CD4-positive, alpha-beta memory T cell (primary cell): ENCODE measurements at regions of chr3 and their contacts with region 1.

Region 1: GRCh38 chr3:36911990-36912804 is 32.7 kb downstream of the TRANK1 start:
- DNase-seq: peak; percentile 54 to 84 (median 65)
- H3K4me3 ChIP-seq: peak overlapping the region; percentile 18 to 41
- H3K4me3 Mint-ChIP-seq: peak overlapping the region; percentile 61 to 84 (median 79)
- H3K27ac ChIP-seq: peak overlapping the region; percentile 72
- H3K27ac Mint-ChIP-seq: peak overlapping the region; percentile 66 to 95 (median 84)
- H3K4me1 ChIP-seq: peaks cover 38% of the 10 kb centered on the region
- H3K4me1 Mint-ChIP-seq: peaks cover 24 to 43% (median 33%) of the 10 kb centered on the region in 4 donors
- H3K27me3 ChIP-seq: no peaks in the 10 kb centered on the region
- H3K27me3 Mint-ChIP-seq: no peaks in the 10 kb centered on the region

Region 2: GRCh38 chr3:36859494-36859893 is 52.7 kb before region 1 on chr3:
- CTCF ChIA-PET with region 1: no interaction called
- POLR2A ChIA-PET with region 1: no interaction called
- intact Hi-C with region 1: no loop called
- DNase-seq: no peak
- H3K4me3 ChIP-seq: no peak overlapping the region
- H3K4me3 Mint-ChIP-seq: no peak overlapping the region
- H3K27ac ChIP-seq: no peak overlapping the region
- H3K27ac Mint-ChIP-seq: peak overlapping the region in 2 of 7 donors; percentile 72 to 87
- H3K4me1 ChIP-seq: peaks cover 8% of the 10 kb centered on the region
- H3K4me1 Mint-ChIP-seq: peaks cover 7 to 19% (median 18%) of the 10 kb centered on the region in 4 donors
- H3K27me3 ChIP-seq: no peaks in the 10 kb centered on the region
- H3K27me3 Mint-ChIP-seq: no peaks in the 10 kb centered on the region

Region 3: DNA sequence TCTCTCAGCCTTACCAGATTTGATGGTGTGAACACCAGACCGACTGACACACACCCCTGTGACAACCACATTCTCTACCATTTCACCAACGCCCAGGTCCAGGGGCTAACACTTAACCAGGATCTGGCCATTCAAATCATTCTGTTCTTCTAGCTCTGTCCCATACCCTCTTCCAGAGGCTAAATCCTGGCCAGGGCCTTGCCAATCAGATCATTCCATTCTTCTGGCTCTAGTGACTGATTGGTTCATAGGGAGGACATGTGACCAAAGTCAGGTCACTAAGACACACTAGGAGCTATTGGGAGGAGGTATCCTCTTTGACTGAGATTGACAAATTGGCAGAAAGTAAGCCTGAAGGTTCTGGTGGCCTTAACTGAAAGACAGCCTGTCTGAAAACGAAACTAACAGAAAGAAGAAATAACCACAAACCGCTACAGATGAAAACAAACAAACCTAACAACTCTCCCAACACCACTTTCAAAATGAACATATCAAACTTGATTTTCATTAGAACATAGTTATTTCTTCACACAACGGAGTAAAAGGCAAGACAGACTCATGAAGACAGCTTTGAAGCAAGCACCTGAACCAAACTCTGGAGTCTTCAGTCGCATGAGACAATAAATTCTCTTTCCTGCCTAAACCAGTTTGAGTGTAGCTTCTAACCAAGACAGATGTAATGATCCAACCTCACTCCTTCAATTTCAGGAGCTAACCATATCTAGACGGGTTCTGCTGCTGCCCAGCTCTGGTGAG is 35.8 kb before region 1 on chr3:
- CTCF ChIA-PET with region 1: interaction called, 6 read pairs
- POLR2A ChIA-PET with region 1: interaction called, 36 read pairs
- intact Hi-C with region 1: loop called (anchors 2 kb)
- DNase-seq: peak; percentile 66 to 81 (median 74)
- H3K4me3 ChIP-seq: peak overlapping the region; percentile 6 to 24
- H3K4me3 Mint-ChIP-seq: peak overlapping the region; percentile 63 to 85 (median 78)
- H3K27ac ChIP-seq: peak overlapping the region; percentile 71
- H3K27ac Mint-ChIP-seq: peak overlapping the region; percentile 83 to 97 (median 95)
- H3K4me1 ChIP-seq: peaks cover 48% of the 10 kb centered on the region
- H3K4me1 Mint-ChIP-seq: peaks cover 50 to 65% (median 54%) of the 10 kb centered on the region in 4 donors
- H3K27me3 ChIP-seq: no peaks in the 10 kb centered on the region
- H3K27me3 Mint-ChIP-seq: no peaks in the 10 kb centered on the region

Region 4: DNA sequence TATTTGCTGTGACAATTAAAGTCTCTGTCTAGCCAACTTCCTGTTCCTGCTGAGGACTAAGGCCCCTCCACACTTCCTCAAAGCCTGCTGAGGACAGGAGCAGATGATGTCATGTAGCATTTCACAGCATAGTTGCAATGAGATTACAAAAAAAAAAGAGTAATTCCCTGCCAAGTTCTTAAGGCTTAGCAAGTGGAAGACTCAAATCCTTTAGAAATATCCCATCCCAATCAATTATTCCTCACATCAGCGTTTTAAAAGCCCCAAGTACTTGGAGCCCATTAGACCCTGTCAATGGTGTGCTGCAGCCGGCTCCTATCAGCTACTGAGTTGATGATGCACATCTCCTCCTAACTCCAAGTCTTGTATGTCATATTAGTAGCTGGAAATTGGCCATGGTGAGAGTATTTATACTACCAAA is 19.1 kb before region 1 on chr3:
- CTCF ChIA-PET with region 1: interaction called, 35 read pairs
- POLR2A ChIA-PET with region 1: interaction called, 59 read pairs
- intact Hi-C with region 1: loop called (anchors 1 kb)
- DNase-seq: peak; percentile 40 to 85 (median 56)
- H3K4me3 ChIP-seq: no peak overlapping the region
- H3K4me3 Mint-ChIP-seq: peak overlapping the region in 4 of 8 donors; percentile 1 to 65 (median 56)
- H3K27ac ChIP-seq: peak overlapping the region; percentile 43
- H3K27ac Mint-ChIP-seq: peak overlapping the region; percentile 79 to 97 (median 93)
- H3K4me1 ChIP-seq: peaks cover 46% of the 10 kb centered on the region
- H3K4me1 Mint-ChIP-seq: peaks cover 40 to 74% (median 55%) of the 10 kb centered on the region in 4 donors
- H3K27me3 ChIP-seq: no peaks in the 10 kb centered on the region
- H3K27me3 Mint-ChIP-seq: no peaks in the 10 kb centered on the region